Calu3 (cell line): ENCODE measurements at regions of chr9 and their contacts with region 1.

Region 1: GRCh38 chr9:122099271-122099869 is 6.3 kb upstream of the TTLL11 start:
- DNase-seq: peak; percentile 74
- H3K4me3 Mint-ChIP-seq: peak overlapping the region; percentile 24
- H3K27ac Mint-ChIP-seq: no peak overlapping the region
- H3K4me1 Mint-ChIP-seq: peaks cover 6% of the 10 kb centered on the region
- H3K27me3 Mint-ChIP-seq: peaks cover 34% of the 10 kb centered on the region
- CTCF ChIP-seq: peak; percentile 73

Region 2: GRCh38 chr9:121944716-121945191 is 154.6 kb before region 1 on chr9:
- CTCF ChIA-PET with region 1: no interaction called
- intact Hi-C with region 1: no loop called
- DNase-seq: peak; percentile 5
- H3K4me3 Mint-ChIP-seq: no peak overlapping the region
- H3K27ac Mint-ChIP-seq: no peak overlapping the region
- H3K4me1 Mint-ChIP-seq: peaks cover 14% of the 10 kb centered on the region
- H3K27me3 Mint-ChIP-seq: no peaks in the 10 kb centered on the region
- CTCF ChIP-seq: no peak

Region 3: DNA sequence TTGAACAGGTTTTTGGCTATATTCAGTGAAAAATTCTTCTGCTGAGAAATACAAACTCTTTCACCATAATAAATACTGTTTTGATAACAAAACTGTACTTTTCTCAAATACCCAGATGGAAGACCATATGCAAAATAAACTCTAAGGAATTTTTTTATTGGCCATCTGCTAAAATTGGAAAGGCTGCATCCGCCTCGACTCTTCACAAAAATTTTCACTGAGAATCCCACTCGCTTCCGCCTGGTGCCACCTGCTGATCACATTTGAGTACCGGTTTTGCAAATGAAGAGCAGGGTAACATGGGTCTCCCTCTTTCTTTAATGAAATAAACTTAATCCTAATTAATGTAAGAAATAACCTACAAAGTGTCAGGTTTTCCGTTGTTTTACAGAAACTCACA is 82.6 kb before region 1 on chr9:
- CTCF ChIA-PET with region 1: no interaction called
- intact Hi-C with region 1: no loop called
- DNase-seq: no peak
- H3K4me3 Mint-ChIP-seq: no peak overlapping the region
- H3K27ac Mint-ChIP-seq: no peak overlapping the region
- H3K4me1 Mint-ChIP-seq: no peaks in the 10 kb centered on the region
- H3K27me3 Mint-ChIP-seq: no peaks in the 10 kb centered on the region
- CTCF ChIP-seq: no peak

Region 4: DNA sequence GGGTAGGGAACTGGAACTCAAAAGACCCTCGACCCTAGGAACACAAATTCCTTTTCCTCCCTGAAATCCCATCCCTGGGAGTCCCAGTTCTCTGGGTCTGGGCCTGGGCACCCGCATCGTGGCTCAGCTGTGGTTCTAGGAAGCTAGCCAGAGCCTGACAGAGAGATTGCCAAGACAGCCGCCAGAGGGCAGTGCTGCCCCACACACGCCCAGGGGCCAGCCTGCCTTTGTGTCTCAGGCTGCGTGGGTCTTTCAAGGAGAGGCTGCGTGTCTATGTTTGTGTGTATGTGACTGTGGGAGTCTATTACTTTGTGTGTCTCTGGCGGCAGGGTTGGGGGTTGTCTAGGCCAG is 25.8 kb after region 1 on chr9:
- CTCF ChIA-PET with region 1: interaction called, 44 read pairs
- intact Hi-C with region 1: loop called (anchors 1 kb)
- DNase-seq: peak; percentile 78
- H3K4me3 Mint-ChIP-seq: no peak overlapping the region
- H3K27ac Mint-ChIP-seq: no peak overlapping the region
- H3K4me1 Mint-ChIP-seq: peaks cover 16% of the 10 kb centered on the region
- H3K27me3 Mint-ChIP-seq: peaks cover 40% of the 10 kb centered on the region
- CTCF ChIP-seq: peak; percentile 67

Region 5: DNA sequence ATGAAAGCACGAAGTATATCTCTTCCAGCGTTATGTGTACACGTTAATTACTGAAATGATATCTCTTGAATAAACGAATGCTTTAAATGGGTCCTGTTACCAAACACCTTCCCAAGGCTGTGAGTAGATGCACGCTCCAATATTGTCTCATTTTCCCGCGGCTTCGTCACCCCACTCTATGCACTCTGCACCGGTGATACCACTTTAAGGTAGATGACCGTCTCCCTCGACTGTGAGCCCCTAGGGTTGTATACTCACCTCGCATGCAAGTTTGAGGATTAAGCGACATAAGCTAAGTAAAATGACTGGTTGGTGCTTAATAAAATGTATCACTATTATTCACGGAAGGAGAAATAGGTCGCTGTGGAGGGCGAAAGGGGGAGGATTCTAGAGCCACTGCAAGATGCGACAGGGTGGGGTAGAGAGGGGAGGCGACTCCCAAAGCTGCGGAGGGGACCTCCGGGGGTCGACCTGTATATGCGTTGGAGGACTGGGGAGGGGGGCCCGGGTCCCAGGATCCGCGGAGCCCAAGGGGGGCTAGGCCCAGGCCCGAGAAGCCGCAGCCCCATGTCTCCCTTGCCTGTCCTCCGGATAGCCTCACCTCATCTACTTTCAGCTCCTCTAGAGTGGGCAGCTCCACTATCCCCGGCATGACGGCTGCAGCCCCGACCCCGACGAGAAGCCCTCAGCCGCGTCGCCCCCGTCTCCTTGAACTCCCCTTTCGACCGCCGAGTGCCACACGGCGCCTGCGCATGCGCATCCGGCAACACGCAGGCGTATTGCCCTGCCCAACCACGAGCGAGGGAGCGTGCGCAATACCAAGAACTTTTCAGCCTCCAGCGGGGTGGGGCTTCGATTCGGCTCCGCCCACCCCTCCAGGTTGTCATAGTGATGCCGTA is 59.9 kb after region 1 on chr9 and contains the starts of genes MORN5 and NDUFA8:
- CTCF ChIA-PET with region 1: no interaction called
- intact Hi-C with region 1: no loop called
- DNase-seq: peak; percentile 94
- H3K4me3 Mint-ChIP-seq: peak within 1 kb of the TSS; percentile 99
- H3K27ac Mint-ChIP-seq: peak within 1 kb of the TSS; percentile 97
- H3K4me1 Mint-ChIP-seq: peaks cover 8% of the 10 kb centered on the region
- H3K27me3 Mint-ChIP-seq: peaks cover 43% of the 10 kb centered on the region
- CTCF ChIP-seq: no peak
- total RNA-seq, gene MORN5: not detected in 2 replicates
- total RNA-seq, gene NDUFA8: 33.5 and 38.8 TPM in 2 replicates

Region 6: DNA sequence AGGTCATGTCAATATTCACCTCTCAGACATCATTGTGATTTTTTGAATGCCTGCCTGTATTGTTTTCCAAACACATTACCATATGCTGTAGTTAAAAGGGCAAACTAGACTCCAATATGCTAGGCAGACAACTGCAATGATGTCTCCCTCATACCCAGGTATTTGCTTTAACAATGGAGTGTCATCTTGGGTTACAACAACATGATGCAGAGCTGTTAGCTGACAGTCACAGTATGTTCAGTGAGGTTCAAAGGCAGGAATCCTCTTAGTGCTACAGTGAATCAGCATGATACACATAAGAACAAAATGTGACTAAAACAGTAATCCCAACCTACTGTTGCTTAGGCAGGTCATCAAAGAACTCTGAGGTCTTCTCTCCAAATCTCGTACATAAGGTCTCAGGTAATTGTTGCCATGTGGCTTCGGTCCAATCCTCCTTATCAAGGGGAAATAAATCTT is 354.3 kb after region 1 on chr9:
- CTCF ChIA-PET with region 1: interaction called, 3 read pairs
- intact Hi-C with region 1: loop called (anchors 2 kb)
- DNase-seq: no peak
- H3K4me3 Mint-ChIP-seq: no peak overlapping the region
- H3K27ac Mint-ChIP-seq: no peak overlapping the region
- H3K4me1 Mint-ChIP-seq: no peaks in the 10 kb centered on the region
- H3K27me3 Mint-ChIP-seq: peaks cover 33% of the 10 kb centered on the region
- CTCF ChIP-seq: no peak

Region 7: GRCh38 chr9:122810306-122810946 is 711.1 kb after region 1 on chr9:
- CTCF ChIA-PET with region 1: no interaction called
- intact Hi-C with region 1: loop called (anchors 1 kb)
- DNase-seq: peak; percentile 59
- H3K4me3 Mint-ChIP-seq: no peak overlapping the region
- H3K27ac Mint-ChIP-seq: no peak overlapping the region
- H3K4me1 Mint-ChIP-seq: no peaks in the 10 kb centered on the region
- H3K27me3 Mint-ChIP-seq: peaks cover 7% of the 10 kb centered on the region
- CTCF ChIP-seq: peak; percentile 63